Right ventricle myocardium inferior (tissue), 1 donor: ENCODE measurements at regions of chr1 and their contacts with region 1.

Region 1: GRCh38 chr1:169348383-169349036 is 19.1 kb downstream of the NME7 start:
- DNase-seq: no peak
- ATAC-seq: no peak

Region 2: DNA sequence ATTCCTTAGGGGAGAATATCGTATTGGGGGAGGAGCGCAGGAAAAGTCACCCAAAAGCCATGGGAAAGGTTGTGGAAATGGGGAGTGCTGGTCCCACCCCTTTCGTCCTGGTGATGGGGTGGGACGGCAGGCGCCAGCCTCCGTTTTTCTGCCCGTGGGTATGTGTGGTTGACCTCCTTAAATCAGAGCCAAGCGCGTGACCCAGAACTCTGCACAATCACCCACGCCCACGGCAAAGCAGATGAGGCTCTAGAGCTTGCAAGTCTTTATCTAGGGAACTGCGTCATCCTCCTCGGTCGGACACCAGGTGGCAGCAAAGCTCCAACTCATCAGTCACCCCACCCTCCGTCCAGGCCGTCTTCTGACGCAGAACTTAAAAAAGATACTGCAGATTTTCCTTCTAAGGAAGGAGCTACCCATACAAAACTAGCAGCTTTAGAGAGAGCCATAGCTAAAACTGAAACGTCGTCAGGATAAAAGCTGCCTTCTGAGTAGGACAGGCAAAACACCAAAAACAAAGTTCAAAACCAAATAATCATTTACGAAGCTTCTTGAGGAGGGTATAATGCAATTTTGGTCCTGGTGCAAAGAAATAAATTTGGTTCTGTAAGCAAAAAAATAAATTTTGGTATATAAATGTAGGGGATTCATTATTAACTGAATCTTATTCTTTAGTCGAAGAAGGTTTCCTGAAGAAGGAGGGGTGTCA is 1005.8 kb before region 1 on chr1:
- intact Hi-C with region 1: loop called (anchors 5 kb)
- DNase-seq: peak; percentile 90
- ATAC-seq: peak; percentile 98

Region 3: DNA sequence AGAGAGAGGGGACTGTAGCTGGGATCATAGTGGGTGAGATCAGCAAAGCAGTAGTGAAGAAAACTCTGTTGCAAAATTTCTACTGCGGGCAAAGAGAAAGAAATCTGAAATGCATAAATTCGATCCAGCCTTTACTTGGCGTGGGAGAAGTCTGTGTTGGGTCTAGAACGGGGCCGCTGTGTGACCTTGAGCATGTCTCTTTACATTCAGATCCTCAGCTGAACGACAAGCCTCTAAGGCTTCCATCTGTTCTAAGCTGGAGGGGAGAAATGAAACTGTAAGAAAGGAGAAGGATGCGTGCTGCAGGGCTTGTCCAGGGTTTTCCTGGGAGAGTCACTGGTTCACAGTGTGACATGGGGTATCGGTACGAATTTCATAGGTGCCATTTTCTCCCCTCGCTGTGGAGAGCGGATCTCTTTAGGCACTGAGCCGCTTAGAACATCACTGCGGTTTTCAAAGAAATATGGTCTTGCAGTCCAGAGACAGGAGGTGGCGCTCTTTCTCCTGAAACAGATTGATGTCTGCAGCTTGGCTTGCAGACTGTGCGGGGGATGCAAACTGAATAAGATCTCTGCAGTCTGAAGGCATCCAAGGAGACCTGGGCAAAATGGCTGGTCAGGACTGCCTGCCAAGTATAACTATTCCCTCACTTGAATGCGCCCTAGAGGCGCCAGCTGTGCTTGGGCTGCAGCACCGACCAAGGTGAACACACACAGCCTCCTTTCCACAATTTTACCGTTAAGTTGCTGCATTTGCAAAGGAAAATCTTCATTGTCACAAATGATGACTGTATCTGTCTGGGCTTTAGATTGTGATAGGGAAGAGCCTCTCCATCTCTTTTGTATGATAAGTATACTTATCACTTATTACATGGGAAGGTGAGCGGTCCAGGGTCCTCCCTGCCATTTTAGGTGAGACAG is 908.8 kb before region 1 on chr1:
- intact Hi-C with region 1: loop called (anchors 5 kb)
- DNase-seq: no peak
- ATAC-seq: peak; percentile 87

Region 4: DNA sequence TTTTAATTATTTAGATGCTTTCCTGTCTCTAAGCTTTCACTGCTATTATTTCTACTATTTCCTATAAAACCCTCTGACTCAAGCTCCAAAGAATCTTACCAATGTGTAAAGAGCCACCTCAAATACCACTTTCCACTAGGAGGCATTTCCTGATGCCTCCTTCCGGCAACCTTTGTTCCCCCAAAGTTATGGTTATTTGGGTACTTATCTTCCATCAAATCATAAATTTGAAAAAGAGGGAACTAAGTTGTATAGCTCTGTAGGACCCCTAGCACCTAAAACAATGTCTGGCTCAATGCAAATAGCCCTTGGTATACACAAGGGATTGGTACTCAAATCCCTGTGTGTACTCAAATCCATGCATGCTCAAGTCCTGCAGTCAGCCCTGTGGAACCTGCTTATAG is 60.5 kb before region 1 on chr1:
- intact Hi-C with region 1: no loop called
- DNase-seq: no peak
- ATAC-seq: no peak